AG04449 (cell line): ENCODE measurements at regions of chr4 and their contacts with region 1.

Region 1: GRCh38 chr4:78876568-78877320 is 62.5 kb downstream of the PAQR3 start:
- DNase-seq: no peak
- H3K4me3 ChIP-seq: no peak overlapping the region
- CTCF ChIP-seq: no peak

Region 2: DNA sequence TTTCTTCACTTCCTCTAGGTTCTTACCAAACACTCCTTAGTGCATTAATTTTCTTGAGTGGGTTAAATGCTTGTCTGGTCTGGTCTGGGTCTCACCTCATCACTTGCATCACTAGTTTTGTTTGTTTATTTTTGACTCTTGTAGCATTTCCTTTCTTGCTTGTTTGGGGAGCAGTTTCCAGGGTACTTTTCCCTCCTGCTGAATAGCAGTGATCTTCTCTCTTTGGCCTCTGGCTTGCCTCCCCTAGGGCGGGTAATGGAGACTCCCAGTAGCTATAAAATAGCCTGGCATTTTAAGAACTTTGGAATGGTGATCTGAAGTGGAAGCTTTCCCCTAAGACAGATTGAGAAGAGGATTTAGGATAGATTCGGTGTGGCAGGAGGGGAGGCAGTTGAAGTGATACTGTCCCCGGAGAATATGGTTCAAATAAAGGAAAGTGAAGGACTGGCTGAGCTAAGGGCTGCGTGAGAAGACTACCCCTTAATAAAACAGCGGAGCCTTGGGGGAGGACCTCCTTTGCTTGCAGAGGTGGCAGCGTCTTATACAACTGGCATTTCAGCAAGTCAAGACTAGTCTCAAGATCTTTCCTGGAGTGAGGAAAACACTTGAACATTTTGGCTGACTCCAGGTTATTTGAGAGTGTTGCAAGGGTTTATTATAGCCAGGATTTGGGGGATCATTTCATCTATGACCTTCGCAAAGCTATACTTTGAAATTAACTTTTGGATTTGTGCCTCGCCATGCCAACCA is 629.0 kb before region 1 on chr4:
- CTCF ChIA-PET with region 1: no interaction called
- POLR2A ChIA-PET with region 1: no interaction called
- DNase-seq: no peak
- H3K4me3 ChIP-seq: no peak overlapping the region
- CTCF ChIP-seq: no peak

Region 3: GRCh38 chr4:78481180-78481579 is 395.6 kb before region 1 on chr4:
- CTCF ChIA-PET with region 1: no interaction called
- POLR2A ChIA-PET with region 1: no interaction called
- DNase-seq: peak; percentile 69
- H3K4me3 ChIP-seq: no peak overlapping the region
- CTCF ChIP-seq: no peak

Region 4: DNA sequence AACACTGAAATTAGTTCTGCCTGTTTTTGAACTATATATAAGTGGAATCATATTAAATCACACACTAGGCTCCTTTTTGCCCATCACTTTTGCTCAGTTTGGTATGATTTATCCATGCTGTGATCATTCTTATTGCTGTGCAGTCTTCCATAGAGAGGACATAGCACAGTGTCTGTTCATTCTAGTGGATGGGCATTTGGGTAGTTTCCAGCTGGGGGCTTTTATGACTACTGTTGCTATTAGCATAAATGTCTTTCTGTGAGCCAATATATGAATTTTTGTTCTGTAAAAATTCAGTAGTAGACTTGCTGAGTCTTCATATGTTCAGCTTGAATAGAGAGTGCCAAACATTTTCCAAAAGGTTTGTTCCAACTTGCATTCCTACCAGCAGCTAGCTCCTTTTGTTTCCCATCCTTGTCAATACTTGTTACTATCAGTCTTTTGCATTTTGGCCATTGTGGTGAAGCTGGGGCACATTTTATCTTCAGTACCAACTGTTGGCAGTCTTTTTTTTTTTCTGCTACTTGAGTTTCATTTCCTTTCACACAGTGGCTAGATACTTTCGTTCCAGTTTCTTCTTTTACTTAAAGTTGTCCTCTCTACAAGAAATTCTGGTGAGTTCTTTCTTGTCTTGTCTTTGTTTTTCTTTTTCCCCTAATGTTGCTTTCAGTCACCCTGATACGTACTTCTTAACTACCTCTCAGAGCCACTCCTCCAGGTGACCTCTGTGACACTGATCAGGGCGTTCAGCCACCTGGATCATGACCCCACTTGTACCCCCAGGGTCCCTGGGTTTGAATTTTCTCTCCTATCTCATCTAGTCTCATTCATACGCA is 238.2 kb before region 1 on chr4:
- CTCF ChIA-PET with region 1: no interaction called
- POLR2A ChIA-PET with region 1: no interaction called
- DNase-seq: no peak
- H3K4me3 ChIP-seq: no peak overlapping the region
- CTCF ChIP-seq: no peak

Region 5: GRCh38 chr4:78864405-78865024 is 12.2 kb before region 1 on chr4:
- CTCF ChIA-PET with region 1: interaction called, 11 read pairs
- POLR2A ChIA-PET with region 1: no interaction called
- DNase-seq: peak; percentile 38
- H3K4me3 ChIP-seq: no peak overlapping the region
- CTCF ChIP-seq: peak; percentile 41